ENCODE measurements at regions of chr1 and their contacts with region 1.

Region 1: DNA sequence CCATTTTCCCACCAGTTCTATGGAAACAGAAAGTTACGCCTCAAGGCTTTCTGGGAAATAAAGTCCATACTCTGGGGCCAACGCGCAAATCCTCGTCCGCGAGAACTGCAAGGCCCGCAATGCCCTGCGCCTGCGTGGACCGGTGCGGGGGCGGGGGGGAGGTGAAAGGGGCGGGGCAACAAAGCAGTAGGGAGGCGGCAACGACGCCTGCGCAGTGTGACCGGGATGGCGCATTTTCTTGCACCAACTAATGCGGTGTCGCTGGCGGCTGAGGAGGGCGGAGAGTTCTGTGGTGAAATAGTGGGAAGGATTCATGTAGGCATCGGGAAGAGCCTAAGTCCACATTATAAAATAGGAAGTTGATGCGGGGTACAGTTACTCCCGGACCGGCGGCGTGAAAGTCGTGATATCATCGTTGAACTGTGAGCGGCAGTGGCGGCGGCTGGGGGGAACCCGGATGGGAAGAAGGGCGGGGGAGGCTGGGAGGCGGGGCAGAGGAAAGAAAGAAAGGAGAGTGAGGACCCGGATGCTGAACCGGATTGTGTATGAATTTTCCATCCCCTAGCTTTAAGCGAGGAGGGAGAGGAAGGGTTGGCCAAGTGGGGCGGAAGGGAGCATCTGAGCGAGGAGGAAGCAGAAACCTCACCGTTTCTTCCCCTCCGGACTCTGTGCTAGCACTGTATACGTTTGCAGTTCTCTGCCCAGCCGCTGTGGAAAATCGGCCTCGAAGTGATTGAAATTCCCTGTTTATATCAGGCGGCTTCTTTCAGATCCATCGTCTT is at the start of gene GGPS1:
- DNase-seq: peak; percentile 98
- H3K4me3 Mint-ChIP-seq: no peak within 1 kb of the TSS
- H3K27ac Mint-ChIP-seq: no peak within 1 kb of the TSS
- H3K4me1 Mint-ChIP-seq: peaks cover 25% of the 10 kb centered on the region
- H3K27me3 Mint-ChIP-seq: no peaks in the 10 kb centered on the region
- total RNA-seq, gene GGPS1: 30.8 and 33.9 TPM in 2 replicates

Region 2: GRCh38 chr1:234599617-234600417 is 728.7 kb before region 1 on chr1:
- intact Hi-C with region 1: loop called (anchors 1 kb)
- DNase-seq: peak; percentile 92
- H3K4me3 Mint-ChIP-seq: peak overlapping the region; percentile 89
- H3K27ac Mint-ChIP-seq: peak overlapping the region; percentile 97
- H3K4me1 Mint-ChIP-seq: peaks cover 47% of the 10 kb centered on the region
- H3K27me3 Mint-ChIP-seq: no peaks in the 10 kb centered on the region

Region 3: DNA sequence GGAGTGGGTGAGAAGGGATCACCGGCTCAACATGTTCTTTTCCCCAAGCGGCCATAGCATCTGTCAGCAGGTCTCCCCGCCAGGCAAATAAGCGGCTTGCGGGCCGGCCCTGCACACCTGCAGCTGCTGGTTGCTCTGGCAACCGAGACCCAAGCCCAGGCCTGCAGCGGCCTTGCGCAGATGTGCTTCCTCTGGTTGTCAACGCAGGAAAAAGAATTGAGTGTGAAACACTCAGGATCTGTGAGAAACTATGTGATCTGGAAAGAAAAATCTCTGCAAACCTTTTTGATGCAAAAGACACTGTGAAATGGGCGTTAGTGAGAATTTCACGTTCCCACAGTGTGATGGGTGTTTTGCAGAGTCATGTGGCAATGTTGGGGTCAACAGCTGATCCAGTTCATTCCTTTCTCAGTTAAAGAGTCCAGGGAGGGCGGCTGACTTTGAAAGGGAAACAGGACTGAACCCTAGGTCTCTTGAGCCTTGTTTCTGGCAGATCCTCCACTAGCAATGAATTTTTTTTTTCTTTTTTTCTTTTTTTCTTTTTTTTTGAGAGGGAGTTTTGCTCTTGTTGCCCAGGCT is 228.3 kb before region 1 on chr1:
- intact Hi-C with region 1: loop called (anchors 5 kb)
- DNase-seq: no peak
- H3K4me3 Mint-ChIP-seq: no peak overlapping the region
- H3K27ac Mint-ChIP-seq: no peak overlapping the region
- H3K4me1 Mint-ChIP-seq: peaks cover 27% of the 10 kb centered on the region
- H3K27me3 Mint-ChIP-seq: no peaks in the 10 kb centered on the region

Region 4: DNA sequence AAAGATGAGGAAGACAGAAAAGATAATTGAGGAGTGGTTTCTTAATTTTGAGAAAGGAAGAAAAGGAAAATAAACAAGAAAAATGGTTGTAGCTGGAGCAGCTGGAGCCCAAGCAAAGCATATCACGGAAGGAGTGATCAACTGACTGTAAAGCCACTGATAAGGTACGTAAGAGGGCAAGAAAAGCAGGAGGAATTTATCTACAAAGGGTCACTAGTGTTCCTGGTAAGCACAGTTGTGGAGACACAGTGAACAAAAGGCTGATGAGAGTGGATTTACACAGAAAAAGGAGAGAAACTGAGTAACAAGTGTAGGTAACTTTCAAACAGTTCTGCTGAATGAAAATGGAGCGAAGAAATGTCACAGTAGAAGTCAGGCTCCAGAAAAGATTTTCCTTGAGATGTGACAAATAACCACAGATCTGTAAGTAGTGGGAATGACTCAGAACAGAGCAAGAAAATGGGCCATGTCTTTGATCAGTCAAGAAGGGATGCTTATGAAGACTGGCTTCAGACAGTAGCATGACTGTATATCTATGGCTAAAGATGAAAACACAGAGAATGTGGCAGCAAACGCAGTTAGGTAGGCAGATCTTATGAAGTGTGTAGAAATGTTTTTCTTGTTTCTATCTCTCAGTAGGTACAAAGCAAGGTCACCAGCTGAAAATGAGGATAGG is 121.9 kb before region 1 on chr1:
- intact Hi-C with region 1: loop called (anchors 5 kb)
- DNase-seq: peak; percentile 68
- H3K4me3 Mint-ChIP-seq: peak overlapping the region; percentile 29
- H3K27ac Mint-ChIP-seq: peak overlapping the region; percentile 89
- H3K4me1 Mint-ChIP-seq: peaks cover 19% of the 10 kb centered on the region
- H3K27me3 Mint-ChIP-seq: no peaks in the 10 kb centered on the region

Region 5: DNA sequence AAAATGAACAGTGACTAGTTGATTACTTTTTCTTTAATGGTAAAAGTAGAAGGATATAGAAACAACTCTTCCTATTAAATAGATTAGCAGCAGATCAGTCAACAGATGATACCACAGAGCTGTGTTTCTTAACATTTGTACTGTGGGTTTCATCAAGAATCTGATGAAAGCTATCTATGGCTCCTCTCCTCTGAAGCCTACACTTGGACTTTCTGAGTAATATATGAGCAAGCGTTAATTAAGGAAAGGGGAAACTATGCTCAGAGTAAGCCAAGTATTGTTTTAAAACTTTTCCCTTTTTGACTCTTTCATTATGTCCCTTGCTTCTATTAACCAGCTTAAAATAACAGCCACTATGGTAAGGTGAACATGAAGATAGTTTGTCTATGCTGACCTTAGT is 11.4 kb before region 1 on chr1:
- intact Hi-C with region 1: loop called (anchors 1 kb)
- DNase-seq: no peak
- H3K4me3 Mint-ChIP-seq: peak overlapping the region; percentile 41
- H3K27ac Mint-ChIP-seq: peak overlapping the region; percentile 73
- H3K4me1 Mint-ChIP-seq: peaks cover 67% of the 10 kb centered on the region
- H3K27me3 Mint-ChIP-seq: no peaks in the 10 kb centered on the region

Region 6: GRCh38 chr1:235442788-235443429 is 114.4 kb after region 1 on chr1:
- intact Hi-C with region 1: no loop called
- DNase-seq: no peak
- H3K4me3 Mint-ChIP-seq: no peak overlapping the region
- H3K27ac Mint-ChIP-seq: no peak overlapping the region
- H3K4me1 Mint-ChIP-seq: peaks cover 2% of the 10 kb centered on the region
- H3K27me3 Mint-ChIP-seq: no peaks in the 10 kb centered on the region

Region 7: DNA sequence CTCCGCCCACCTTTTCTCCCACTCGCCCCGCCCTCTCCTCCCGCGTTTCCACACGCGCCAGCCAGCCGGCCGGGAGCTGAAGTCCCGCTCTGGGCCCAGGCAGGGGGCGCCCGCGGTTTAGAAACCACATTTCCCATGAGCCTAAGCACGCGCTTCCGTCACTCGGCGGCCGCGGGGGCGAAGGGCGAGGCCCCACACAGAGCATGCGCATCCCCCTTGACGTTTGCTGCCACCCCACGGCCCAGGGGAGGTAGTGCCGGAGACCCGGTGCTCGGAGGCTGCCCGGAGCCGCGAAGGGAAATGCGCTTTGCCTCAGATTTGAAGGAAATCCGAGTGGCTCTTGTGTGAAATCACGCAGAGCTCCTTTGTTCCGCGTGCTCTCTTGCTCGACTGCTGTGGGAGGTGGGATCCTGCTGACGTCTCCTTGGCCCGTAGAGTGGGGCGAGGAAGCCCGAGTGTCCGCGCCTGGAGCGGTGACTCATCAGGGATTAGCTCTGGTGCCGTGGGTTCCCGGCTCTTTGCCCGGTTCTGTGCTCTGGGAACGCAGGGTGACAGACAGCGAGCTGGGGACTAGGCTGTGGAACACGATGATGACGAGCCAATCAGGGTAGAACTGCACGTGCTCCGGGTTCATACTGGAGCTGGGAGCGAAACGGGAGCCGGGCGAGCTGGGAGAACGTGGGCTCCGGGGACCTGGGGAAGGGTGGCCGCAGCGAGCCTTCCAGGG is 176.1 kb after region 1 on chr1:
- intact Hi-C with region 1: loop called (anchors 2 kb)
- DNase-seq: peak; percentile 99
- H3K4me3 Mint-ChIP-seq: peak overlapping the region; percentile 95
- H3K27ac Mint-ChIP-seq: peak overlapping the region; percentile 97
- H3K4me1 Mint-ChIP-seq: peaks cover 25% of the 10 kb centered on the region
- H3K27me3 Mint-ChIP-seq: peaks cover 6% of the 10 kb centered on the region

Region 8: DNA sequence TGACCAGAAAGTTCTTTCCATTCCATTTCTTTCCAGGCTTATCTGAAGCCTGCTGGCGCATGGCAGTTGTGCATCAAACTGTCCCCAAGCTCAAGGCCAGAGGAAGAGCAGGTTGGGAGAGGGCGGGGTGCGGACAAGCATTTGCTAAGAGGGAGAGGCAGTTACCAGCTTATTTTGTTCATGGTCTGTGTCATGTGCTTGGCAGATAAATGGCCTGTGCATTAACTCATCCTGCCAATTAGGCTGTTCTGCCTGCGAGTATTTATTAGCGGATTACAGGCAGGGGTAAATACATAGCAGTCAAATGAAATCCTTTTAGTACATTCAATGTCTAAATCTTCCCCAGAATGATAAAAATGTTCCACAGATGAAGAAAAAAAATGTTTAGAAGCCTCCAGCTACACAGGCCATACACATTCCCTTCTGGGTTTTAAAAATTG is 224.6 kb after region 1 on chr1:
- intact Hi-C with region 1: no loop called
- DNase-seq: no peak
- H3K4me3 Mint-ChIP-seq: no peak overlapping the region
- H3K27ac Mint-ChIP-seq: no peak overlapping the region
- H3K4me1 Mint-ChIP-seq: no peaks in the 10 kb centered on the region
- H3K27me3 Mint-ChIP-seq: peaks cover 2% of the 10 kb centered on the region

Region 9: DNA sequence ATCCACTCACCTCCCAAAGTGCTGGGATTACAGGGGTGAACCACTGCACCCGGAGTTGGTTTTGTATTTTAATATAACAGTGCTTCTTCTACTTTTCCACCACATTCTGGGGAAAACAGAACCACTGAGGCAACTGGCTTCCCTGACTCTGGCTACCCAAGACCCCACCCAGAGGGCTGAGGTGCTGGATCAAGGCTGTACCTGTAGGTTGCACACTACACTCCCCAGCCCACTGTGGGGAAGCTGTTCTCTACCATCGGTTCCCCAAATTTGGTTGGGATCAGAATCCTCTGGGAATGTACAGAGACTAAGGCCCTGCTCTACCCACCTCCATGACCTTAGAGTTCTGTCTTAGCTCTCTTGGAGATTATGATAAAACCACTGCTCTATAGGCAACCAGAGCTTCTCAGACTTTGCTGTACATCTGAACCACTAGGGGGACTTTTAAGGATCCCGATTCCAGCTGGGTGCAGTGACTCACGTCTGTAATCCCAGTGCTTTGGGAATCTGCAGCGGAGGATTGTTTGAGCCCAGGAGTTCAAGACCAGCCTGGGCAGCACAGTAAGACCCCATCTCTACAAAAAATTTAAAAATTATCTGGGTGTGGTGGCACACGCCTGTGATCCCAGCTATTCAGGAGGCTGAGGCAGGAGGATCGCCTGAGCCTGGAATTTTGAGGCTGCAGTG is 269.5 kb after region 1 on chr1:
- intact Hi-C with region 1: no loop called
- DNase-seq: no peak
- H3K4me3 Mint-ChIP-seq: no peak overlapping the region
- H3K27ac Mint-ChIP-seq: no peak overlapping the region
- H3K4me1 Mint-ChIP-seq: peaks cover 8% of the 10 kb centered on the region
- H3K27me3 Mint-ChIP-seq: peaks cover 11% of the 10 kb centered on the region